CD4-positive, alpha-beta memory T cell (primary cell): ENCODE measurements at regions of chr1 and their contacts with region 1.

Region 1: GRCh38 chr1:91015794-91016550 is 5.9 kb downstream of the ZNF644 start:
- DNase-seq: no peak
- H3K4me3 ChIP-seq: no peak overlapping the region
- H3K4me3 Mint-ChIP-seq: peak overlapping the region in 5 of 8 donors; percentile 38 to 68 (median 51)
- H3K27ac ChIP-seq: no peak overlapping the region
- H3K27ac Mint-ChIP-seq: peak overlapping the region in 1 of 7 donors; percentile 6
- H3K4me1 ChIP-seq: peaks cover 88% of the 10 kb centered on the region
- H3K4me1 Mint-ChIP-seq: peaks cover 64 to 86% (median 76%) of the 10 kb centered on the region in 4 donors
- H3K27me3 ChIP-seq: no peaks in the 10 kb centered on the region
- H3K27me3 Mint-ChIP-seq: no peaks in the 10 kb centered on the region

Region 2: GRCh38 chr1:90977522-90977921 is 38.5 kb before region 1 on chr1:
- CTCF ChIA-PET with region 1: interaction called, 3 read pairs
- POLR2A ChIA-PET with region 1: interaction called, 5 read pairs
- intact Hi-C with region 1: loop called (anchors 5 kb)
- DNase-seq: no peak
- H3K4me3 ChIP-seq: no peak overlapping the region
- H3K4me3 Mint-ChIP-seq: no peak overlapping the region
- H3K27ac ChIP-seq: no peak overlapping the region
- H3K27ac Mint-ChIP-seq: no peak overlapping the region
- H3K4me1 ChIP-seq: no peaks in the 10 kb centered on the region
- H3K4me1 Mint-ChIP-seq: peaks cover 28 to 39% (median 32%) of the 10 kb centered on the region in 4 donors
- H3K27me3 ChIP-seq: no peaks in the 10 kb centered on the region
- H3K27me3 Mint-ChIP-seq: no peaks in the 10 kb centered on the region

Region 3: GRCh38 chr1:90989302-90989701 is 26.7 kb before region 1 on chr1:
- CTCF ChIA-PET with region 1: no interaction called
- POLR2A ChIA-PET with region 1: no interaction called
- intact Hi-C with region 1: no loop called
- DNase-seq: no peak
- H3K4me3 ChIP-seq: no peak overlapping the region
- H3K4me3 Mint-ChIP-seq: no peak overlapping the region
- H3K27ac ChIP-seq: no peak overlapping the region
- H3K27ac Mint-ChIP-seq: peak overlapping the region in 1 of 7 donors; percentile 35
- H3K4me1 ChIP-seq: peaks cover 14% of the 10 kb centered on the region
- H3K4me1 Mint-ChIP-seq: peaks cover 35 to 82% (median 68%) of the 10 kb centered on the region in 4 donors
- H3K27me3 ChIP-seq: no peaks in the 10 kb centered on the region
- H3K27me3 Mint-ChIP-seq: no peaks in the 10 kb centered on the region